Caco-2 (cell line): ENCODE measurements at regions of chr15 and their contacts with region 1.

Region 1: GRCh38 chr15:25136119-25136518 is 181.3 kb downstream of the SNRPN start:
- DNase-seq: no peak
- H3K4me3 ChIP-seq: no peak overlapping the region
- H3K4me3 Mint-ChIP-seq: no peak overlapping the region
- H3K27ac Mint-ChIP-seq: no peak overlapping the region
- H3K4me1 ChIP-seq: peaks cover 5% of the 10 kb centered on the region; the same call in 1 of the 2 replicates
- H3K4me1 Mint-ChIP-seq: peaks cover 11% of the 10 kb centered on the region
- H3K27me3 ChIP-seq: no peaks in the 10 kb centered on the region
- H3K27me3 Mint-ChIP-seq: no peaks in the 10 kb centered on the region
- CTCF ChIP-seq: peak in 1 of 2 experiments; percentile 10

Region 2: DNA sequence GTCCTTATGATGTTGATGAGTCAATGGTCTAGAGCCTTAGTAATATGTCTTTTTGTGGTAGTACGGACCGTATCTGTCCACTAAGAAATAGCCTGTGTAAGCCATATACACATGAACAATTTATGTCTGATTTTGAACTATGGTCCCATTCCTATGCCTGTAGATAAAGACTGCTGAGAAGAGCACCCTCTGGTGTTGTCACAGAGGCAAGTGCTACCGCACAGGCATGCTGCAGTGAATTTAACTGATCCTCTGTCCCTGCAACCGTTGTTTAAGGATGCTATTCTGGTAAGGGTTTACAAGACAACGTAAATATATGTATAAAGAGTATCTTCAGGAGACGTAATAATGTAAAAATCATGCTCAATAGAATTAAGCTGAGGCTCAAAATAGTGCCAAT is 132.0 kb after region 1 on chr15:
- CTCF ChIA-PET with region 1: no interaction called
- POLR2A ChIA-PET with region 1: no interaction called
- intact Hi-C with region 1: loop called (anchors 10 kb)
- DNase-seq: no peak
- H3K4me3 ChIP-seq: no peak overlapping the region
- H3K4me3 Mint-ChIP-seq: no peak overlapping the region
- H3K27ac Mint-ChIP-seq: no peak overlapping the region
- H3K4me1 ChIP-seq: no peaks in the 10 kb centered on the region; the same call in 1 of the 2 replicates
- H3K4me1 Mint-ChIP-seq: no peaks in the 10 kb centered on the region
- H3K27me3 ChIP-seq: no peaks in the 10 kb centered on the region
- H3K27me3 Mint-ChIP-seq: no peaks in the 10 kb centered on the region
- CTCF ChIP-seq: no peak